HCT116 (cell line): ENCODE measurements at regions of chr15 and their contacts with region 1.

Region 1: GRCh38 chr15:58770857-58771620 is at the start of gene MINDY2:
- DNase-seq: peak; percentile 97
- ATAC-seq: peak; percentile 96
- H3K4me3 ChIP-seq: peak within 1 kb of the TSS; percentile 84 to 94
- H3K27ac ChIP-seq: peak within 1 kb of the TSS; percentile 92
- H3K4me1 ChIP-seq: peaks cover 14 to 18% of the 10 kb centered on the region in 2 experiments
- H3K27me3 ChIP-seq: no peaks in the 10 kb centered on the region
- CTCF ChIP-seq: peak in 1 of 3 experiments; percentile 30; a peak in 3 of 6 replicates
- POLR2A ChIP-seq: peak; percentile 80
- RAD21 ChIP-seq: peak; percentile 42; the same call in 1 of the 2 replicates
- total RNA-seq, gene MINDY2: 17.6 TPM

Region 2: GRCh38 chr15:58438956-58439355 is 332.1 kb before region 1 on chr15:
- CTCF ChIA-PET with region 1: no interaction called
- POLR2A ChIA-PET with region 1: interaction called, 3 read pairs
- RAD21 ChIA-PET with region 1: no interaction called
- intact Hi-C with region 1: loop called (anchors 5 kb)
- DNase-seq: peak; percentile 60
- ATAC-seq: peak; percentile 67
- H3K4me3 ChIP-seq: no peak overlapping the region
- H3K27ac ChIP-seq: peak overlapping the region; percentile 98
- H3K4me1 ChIP-seq: peaks cover 40 to 54% of the 10 kb centered on the region in 2 experiments
- H3K27me3 ChIP-seq: no peaks in the 10 kb centered on the region
- CTCF ChIP-seq: peak; percentile 16 to 52 (median 41); a peak in 3 of 6 replicates
- POLR2A ChIP-seq: no peak
- RAD21 ChIP-seq: peak; percentile 61

Region 3: GRCh38 chr15:58457381-58457965 is 313.6 kb before region 1 on chr15:
- CTCF ChIA-PET with region 1: no interaction called
- POLR2A ChIA-PET with region 1: no interaction called
- RAD21 ChIA-PET with region 1: no interaction called
- intact Hi-C with region 1: no loop called
- DNase-seq: no peak
- ATAC-seq: peak; percentile 58
- H3K4me3 ChIP-seq: peak overlapping the region in 1 of 2 experiments; percentile 3; a peak in 1 of 4 replicates
- H3K27ac ChIP-seq: 0 out of 2 replicates have a peak overlapping the region, but pooled peaks have one; percentile 16
- H3K4me1 ChIP-seq: peaks cover 11 to 36% of the 10 kb centered on the region in 2 experiments; a peak in 3 of 4 replicates
- H3K27me3 ChIP-seq: no peaks in the 10 kb centered on the region
- CTCF ChIP-seq: no peak
- POLR2A ChIP-seq: no peak
- RAD21 ChIP-seq: no peak

Region 4: GRCh38 chr15:58749532-58750337 is 21.3 kb before region 1 on chr15 and contains the start of gene ADAM10:
- CTCF ChIA-PET with region 1: interaction called, 7 read pairs
- POLR2A ChIA-PET with region 1: interaction called, 16 read pairs
- RAD21 ChIA-PET with region 1: no interaction called
- intact Hi-C with region 1: no loop called
- DNase-seq: peak; percentile 95
- ATAC-seq: peak; percentile 94
- H3K4me3 ChIP-seq: peak within 1 kb of the TSS; percentile 89 to 94
- H3K27ac ChIP-seq: peak within 1 kb of the TSS; percentile 94
- H3K4me1 ChIP-seq: peaks cover 10 to 18% of the 10 kb centered on the region in 2 experiments
- H3K27me3 ChIP-seq: no peaks in the 10 kb centered on the region
- CTCF ChIP-seq: no peak
- POLR2A ChIP-seq: peak; percentile 21
- RAD21 ChIP-seq: no peak
- total RNA-seq, gene ADAM10: 158 TPM

Region 5: DNA sequence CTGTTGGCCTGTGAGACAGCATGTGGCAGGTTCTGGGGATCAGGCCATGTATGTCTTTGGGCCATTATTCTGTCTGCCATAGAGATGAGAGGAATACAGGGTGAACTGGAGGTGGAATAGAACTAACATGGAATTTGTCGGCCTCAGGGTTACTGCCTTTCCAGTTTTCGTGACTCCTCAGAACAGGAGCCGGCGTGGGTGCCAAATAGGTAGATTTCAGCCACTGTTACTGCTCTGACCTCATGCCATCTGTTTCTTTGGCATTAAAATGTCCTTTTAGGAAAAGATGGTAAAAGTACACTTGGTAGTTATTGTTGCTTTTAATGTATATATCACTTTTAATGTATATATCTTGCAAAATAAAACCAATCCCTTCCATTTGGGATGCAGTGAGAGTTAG is 96.9 kb after region 1 on chr15:
- CTCF ChIA-PET with region 1: interaction called, 4 read pairs
- POLR2A ChIA-PET with region 1: interaction called, 4 read pairs
- RAD21 ChIA-PET with region 1: no interaction called
- intact Hi-C with region 1: loop called (anchors 2 kb)
- DNase-seq: no peak
- ATAC-seq: no peak
- H3K4me3 ChIP-seq: no peak overlapping the region
- H3K27ac ChIP-seq: no peak overlapping the region
- H3K4me1 ChIP-seq: peaks cover 5 to 13% of the 10 kb centered on the region in 2 experiments; a peak in 3 of 4 replicates
- H3K27me3 ChIP-seq: no peaks in the 10 kb centered on the region
- CTCF ChIP-seq: no peak
- POLR2A ChIP-seq: no peak
- RAD21 ChIP-seq: no peak

Region 6: GRCh38 chr15:58933281-58934113 is 162.5 kb after region 1 on chr15 and contains the start of gene SLTM:
- CTCF ChIA-PET with region 1: no interaction called
- POLR2A ChIA-PET with region 1: interaction called, 3 read pairs
- RAD21 ChIA-PET with region 1: no interaction called
- intact Hi-C with region 1: loop called (anchors 5 kb)
- DNase-seq: peak; percentile 82
- ATAC-seq: peak; percentile 95
- H3K4me3 ChIP-seq: peak within 1 kb of the TSS; percentile 83 to 95
- H3K27ac ChIP-seq: peak within 1 kb of the TSS; percentile 100
- H3K4me1 ChIP-seq: peaks cover 12 to 21% of the 10 kb centered on the region in 2 experiments; a peak in 3 of 4 replicates
- H3K27me3 ChIP-seq: no peaks in the 10 kb centered on the region
- CTCF ChIP-seq: 0 out of 6 replicates have a peak, but pooled peaks of 1 of the 3 experiments have one; percentile 21
- POLR2A ChIP-seq: peak; percentile 98
- RAD21 ChIP-seq: no peak
- total RNA-seq, gene SLTM: 88.7 TPM

Region 7: DNA sequence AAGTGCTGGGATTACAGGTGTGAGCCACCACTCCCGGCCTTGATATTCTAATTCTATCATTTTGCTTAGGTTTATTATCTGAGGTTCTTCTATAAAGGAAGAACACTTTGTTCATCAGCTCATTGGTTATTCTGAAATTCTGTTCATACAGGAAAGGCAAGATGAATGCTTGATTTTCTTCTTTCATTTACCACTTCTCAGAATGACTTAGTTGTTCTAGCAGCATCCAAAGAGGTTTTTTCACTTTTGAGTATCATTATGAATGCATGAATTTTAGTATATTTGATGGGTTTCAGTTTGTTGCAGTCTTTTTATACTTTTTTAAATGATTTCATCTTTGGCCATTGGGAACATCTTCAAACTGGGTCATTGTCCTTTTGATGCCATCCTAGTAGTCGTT is 268.2 kb after region 1 on chr15:
- CTCF ChIA-PET with region 1: no interaction called
- POLR2A ChIA-PET with region 1: no interaction called
- RAD21 ChIA-PET with region 1: no interaction called
- intact Hi-C with region 1: no loop called
- DNase-seq: no peak
- ATAC-seq: no peak
- H3K4me3 ChIP-seq: no peak overlapping the region
- H3K27ac ChIP-seq: no peak overlapping the region
- H3K4me1 ChIP-seq: no peaks in the 10 kb centered on the region
- H3K27me3 ChIP-seq: no peaks in the 10 kb centered on the region
- CTCF ChIP-seq: no peak
- POLR2A ChIP-seq: no peak
- RAD21 ChIP-seq: no peak